Mucosa of descending colon (tissue), 3 donors: ENCODE measurements at regions of chr16 and their contacts with region 1.

Region 1: GRCh38 chr16:31458844-31459721 is at the start of gene ARMC5:
- DNase-seq: peak; percentile 97 to 99 (median 97)
- ATAC-seq: peak; percentile 85
- H3K4me3 ChIP-seq: peak within 1 kb of the TSS; percentile 66
- H3K4me1 ChIP-seq: peaks cover 34% of the 10 kb centered on the region
- CTCF ChIP-seq: peak; percentile 27
- total RNA-seq, gene ARMC5: 8.3 to 9.9 (median 8.5) TPM

Region 2: GRCh38 chr16:31873556-31874365 is 414.7 kb after region 1 on chr16 and contains the start of gene ZNF267:
- intact Hi-C with region 1: loop called in 1 of 2 experiments (anchors 5 kb)
- DNase-seq: peak; percentile 90 to 97 (median 94)
- ATAC-seq: peak; percentile 94
- H3K4me3 ChIP-seq: peak within 1 kb of the TSS; percentile 98
- H3K4me1 ChIP-seq: peaks cover 34% of the 10 kb centered on the region
- CTCF ChIP-seq: no peak
- total RNA-seq, gene ZNF267: 10.5 to 12.3 (median 11.2) TPM